Naive thymus-derived CD4-positive, alpha-beta T cell (primary cell): ENCODE measurements at regions of chr12 and their contacts with region 1.

Region 1: GRCh38 chr12:89470741-89471509 is 53.7 kb downstream of the GALNT4 start:
- DNase-seq: peak in 6 of 9 donors; percentile 28 to 56 (median 46)
- ATAC-seq: peak; percentile 86
- H3K4me3 ChIP-seq: no peak overlapping the region
- H3K4me3 Mint-ChIP-seq: peak overlapping the region in 1 of 10 donors; percentile 35
- H3K27ac ChIP-seq: no peak overlapping the region
- H3K27ac Mint-ChIP-seq: peak overlapping the region in 5 of 9 donors; percentile 12 to 85 (median 48)
- H3K4me1 ChIP-seq: peaks cover 23 to 31% of the 10 kb centered on the region in 2 donors
- H3K4me1 Mint-ChIP-seq: peaks cover 26 to 63% (median 44%) of the 10 kb centered on the region in 7 donors
- H3K27me3 ChIP-seq: no peaks in the 10 kb centered on the region
- H3K27me3 Mint-ChIP-seq: no peaks in the 10 kb centered on the region

Region 2: GRCh38 chr12:89208661-89209096 is 262.2 kb before region 1 on chr12:
- CTCF ChIA-PET with region 1: no interaction called
- POLR2A ChIA-PET with region 1: no interaction called
- intact Hi-C with region 1: no loop called
- DNase-seq: no peak
- ATAC-seq: no peak
- H3K4me3 ChIP-seq: no peak overlapping the region
- H3K4me3 Mint-ChIP-seq: no peak overlapping the region
- H3K27ac ChIP-seq: no peak overlapping the region
- H3K27ac Mint-ChIP-seq: no peak overlapping the region
- H3K4me1 ChIP-seq: peaks cover 0 to 5% of the 10 kb centered on the region in 2 donors
- H3K4me1 Mint-ChIP-seq: peaks cover 12 to 34% (median 17%) of the 10 kb centered on the region in 7 donors
- H3K27me3 ChIP-seq: no peaks in the 10 kb centered on the region
- H3K27me3 Mint-ChIP-seq: no peaks in the 10 kb centered on the region

Region 3: DNA sequence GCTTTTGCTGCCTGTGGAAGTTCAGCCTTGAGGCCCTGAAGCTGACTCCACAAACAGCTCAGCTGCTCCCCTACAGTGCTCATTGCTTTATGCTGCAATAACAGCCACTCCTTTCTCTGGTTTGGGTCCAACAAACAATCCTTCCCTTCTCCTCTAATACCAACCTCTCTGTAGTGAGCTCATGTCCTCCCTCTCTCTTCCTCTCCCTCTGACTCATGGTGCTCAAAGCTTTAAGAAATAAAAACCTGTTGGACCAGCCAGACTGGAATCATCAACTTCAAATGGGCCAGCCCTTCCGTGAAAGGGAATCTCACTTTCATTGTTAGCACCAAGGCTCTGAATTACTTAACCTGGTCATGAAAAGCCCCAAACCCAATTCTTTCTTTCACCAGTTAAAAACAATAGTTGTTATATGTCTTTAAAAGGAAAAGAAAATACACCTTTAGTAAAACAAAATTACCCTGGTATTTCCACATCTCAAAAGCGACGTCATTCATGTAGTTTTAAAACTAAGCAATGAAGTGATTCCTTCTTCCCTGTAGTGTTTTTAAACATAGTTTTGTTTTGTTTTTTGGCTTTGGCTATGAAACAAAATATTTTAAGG is 245.0 kb before region 1 on chr12:
- CTCF ChIA-PET with region 1: no interaction called
- POLR2A ChIA-PET with region 1: no interaction called
- intact Hi-C with region 1: loop called in 1 of 2 experiments (anchors 2 kb)
- DNase-seq: peak in 1 of 9 donors; percentile 47
- ATAC-seq: peak; percentile 26
- H3K4me3 ChIP-seq: no peak overlapping the region
- H3K4me3 Mint-ChIP-seq: peak overlapping the region in 8 of 10 donors; percentile 26 to 74 (median 54)
- H3K27ac ChIP-seq: no peak overlapping the region
- H3K27ac Mint-ChIP-seq: peak overlapping the region; percentile 38 to 94 (median 63)
- H3K4me1 ChIP-seq: peaks cover 16 to 17% of the 10 kb centered on the region in 2 donors
- H3K4me1 Mint-ChIP-seq: peaks cover 18 to 76% (median 48%) of the 10 kb centered on the region in 7 donors
- H3K27me3 ChIP-seq: no peaks in the 10 kb centered on the region
- H3K27me3 Mint-ChIP-seq: no peaks in the 10 kb centered on the region

Region 4: GRCh38 chr12:89494411-89495231 is 23.7 kb after region 1 on chr12:
- CTCF ChIA-PET with region 1: no interaction called
- POLR2A ChIA-PET with region 1: no interaction called
- intact Hi-C with region 1: loop called in 1 of 2 experiments (anchors 2 kb)
- DNase-seq: peak in 1 of 9 donors; percentile 38
- ATAC-seq: peak; percentile 57
- H3K4me3 ChIP-seq: no peak overlapping the region
- H3K4me3 Mint-ChIP-seq: peak overlapping the region in 1 of 10 donors; percentile 55
- H3K27ac ChIP-seq: no peak overlapping the region
- H3K27ac Mint-ChIP-seq: peak overlapping the region in 2 of 9 donors; percentile 13 to 85
- H3K4me1 ChIP-seq: no peaks in the 10 kb centered on the region
- H3K4me1 Mint-ChIP-seq: peaks cover 0 to 28% (median 5%) of the 10 kb centered on the region in 7 donors
- H3K27me3 ChIP-seq: no peaks in the 10 kb centered on the region
- H3K27me3 Mint-ChIP-seq: no peaks in the 10 kb centered on the region

Region 5: GRCh38 chr12:89529738-89530137 is 58.8 kb after region 1 on chr12:
- CTCF ChIA-PET with region 1: interaction called, 11 read pairs
- POLR2A ChIA-PET with region 1: interaction called, 5 read pairs
- intact Hi-C with region 1: loop called (anchors 1 kb)
- DNase-seq: peak in 7 of 9 donors; percentile 30 to 62 (median 52)
- ATAC-seq: peak; percentile 58
- H3K4me3 ChIP-seq: no peak overlapping the region
- H3K4me3 Mint-ChIP-seq: no peak overlapping the region
- H3K27ac ChIP-seq: no peak overlapping the region
- H3K27ac Mint-ChIP-seq: peak overlapping the region in 4 of 9 donors; percentile 7 to 71 (median 47)
- H3K4me1 ChIP-seq: peaks cover 5 to 6% of the 10 kb centered on the region in 2 donors
- H3K4me1 Mint-ChIP-seq: peaks cover 4 to 28% (median 16%) of the 10 kb centered on the region in 7 donors
- H3K27me3 ChIP-seq: no peaks in the 10 kb centered on the region
- H3K27me3 Mint-ChIP-seq: no peaks in the 10 kb centered on the region

Region 6: DNA sequence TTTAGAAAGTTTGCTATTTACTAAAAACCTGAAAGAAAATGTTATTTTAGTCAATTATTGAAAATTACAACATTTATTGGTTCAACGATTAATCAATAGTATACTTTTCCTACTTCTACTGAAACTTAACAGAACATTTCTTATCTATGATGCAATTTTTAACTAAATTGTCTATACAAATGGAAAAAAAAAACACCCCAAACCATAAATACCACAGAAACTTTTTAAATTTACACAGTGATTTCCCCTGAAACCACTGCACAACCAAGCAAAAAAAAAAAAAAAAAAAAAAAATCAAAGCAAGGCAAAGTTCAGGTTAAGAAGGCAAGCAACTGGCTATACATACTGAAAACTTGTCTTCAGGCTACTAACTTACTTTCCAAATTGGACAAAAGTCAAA is 126.8 kb after region 1 on chr12:
- CTCF ChIA-PET with region 1: no interaction called
- POLR2A ChIA-PET with region 1: no interaction called
- intact Hi-C with region 1: no loop called
- DNase-seq: no peak
- ATAC-seq: no peak
- H3K4me3 ChIP-seq: no peak overlapping the region
- H3K4me3 Mint-ChIP-seq: no peak overlapping the region
- H3K27ac ChIP-seq: no peak overlapping the region
- H3K27ac Mint-ChIP-seq: peak overlapping the region in 2 of 9 donors; percentile 51 to 63
- H3K4me1 ChIP-seq: no peaks in the 10 kb centered on the region
- H3K4me1 Mint-ChIP-seq: peaks cover 4 to 15% (median 12%) of the 10 kb centered on the region in 7 donors
- H3K27me3 ChIP-seq: no peaks in the 10 kb centered on the region
- H3K27me3 Mint-ChIP-seq: peaks cover 0 to 8% (median 0%) of the 10 kb centered on the region in 5 donors

Region 7: GRCh38 chr12:90102957-90103652 is 632.2 kb after region 1 on chr12:
- CTCF ChIA-PET with region 1: no interaction called
- POLR2A ChIA-PET with region 1: no interaction called
- intact Hi-C with region 1: loop called (anchors 1 to 5 kb)
- DNase-seq: peak in 6 of 9 donors; percentile 17 to 56 (median 44)
- ATAC-seq: peak; percentile 79
- H3K4me3 ChIP-seq: no peak overlapping the region
- H3K4me3 Mint-ChIP-seq: peak overlapping the region in 8 of 10 donors; percentile 47 to 75 (median 70)
- H3K27ac ChIP-seq: no peak overlapping the region
- H3K27ac Mint-ChIP-seq: peak overlapping the region in 4 of 9 donors; percentile 38 to 63 (median 48)
- H3K4me1 ChIP-seq: no peaks in the 10 kb centered on the region
- H3K4me1 Mint-ChIP-seq: peaks cover 4 to 12% (median 6%) of the 10 kb centered on the region in 7 donors
- H3K27me3 ChIP-seq: no peaks in the 10 kb centered on the region
- H3K27me3 Mint-ChIP-seq: peaks cover 4 to 15% (median 11%) of the 10 kb centered on the region in 5 donors

Region 8: GRCh38 chr12:90940872-90941499 is 1470.1 kb after region 1 on chr12:
- CTCF ChIA-PET with region 1: no interaction called
- POLR2A ChIA-PET with region 1: no interaction called
- intact Hi-C with region 1: loop called in 1 of 2 experiments (anchors 5 kb)
- DNase-seq: peak in 1 of 9 donors; percentile 14
- ATAC-seq: no peak
- H3K4me3 ChIP-seq: no peak overlapping the region
- H3K4me3 Mint-ChIP-seq: no peak overlapping the region
- H3K27ac ChIP-seq: no peak overlapping the region
- H3K27ac Mint-ChIP-seq: no peak overlapping the region
- H3K4me1 ChIP-seq: no peaks in the 10 kb centered on the region
- H3K4me1 Mint-ChIP-seq: peaks cover 0 to 2% (median 0%) of the 10 kb centered on the region in 7 donors
- H3K27me3 ChIP-seq: no peaks in the 10 kb centered on the region
- H3K27me3 Mint-ChIP-seq: peaks cover 5 to 13% (median 5%) of the 10 kb centered on the region in 5 donors